ENCODE measurements at regions of chr1 and their contacts with region 1.

Region 1: DNA sequence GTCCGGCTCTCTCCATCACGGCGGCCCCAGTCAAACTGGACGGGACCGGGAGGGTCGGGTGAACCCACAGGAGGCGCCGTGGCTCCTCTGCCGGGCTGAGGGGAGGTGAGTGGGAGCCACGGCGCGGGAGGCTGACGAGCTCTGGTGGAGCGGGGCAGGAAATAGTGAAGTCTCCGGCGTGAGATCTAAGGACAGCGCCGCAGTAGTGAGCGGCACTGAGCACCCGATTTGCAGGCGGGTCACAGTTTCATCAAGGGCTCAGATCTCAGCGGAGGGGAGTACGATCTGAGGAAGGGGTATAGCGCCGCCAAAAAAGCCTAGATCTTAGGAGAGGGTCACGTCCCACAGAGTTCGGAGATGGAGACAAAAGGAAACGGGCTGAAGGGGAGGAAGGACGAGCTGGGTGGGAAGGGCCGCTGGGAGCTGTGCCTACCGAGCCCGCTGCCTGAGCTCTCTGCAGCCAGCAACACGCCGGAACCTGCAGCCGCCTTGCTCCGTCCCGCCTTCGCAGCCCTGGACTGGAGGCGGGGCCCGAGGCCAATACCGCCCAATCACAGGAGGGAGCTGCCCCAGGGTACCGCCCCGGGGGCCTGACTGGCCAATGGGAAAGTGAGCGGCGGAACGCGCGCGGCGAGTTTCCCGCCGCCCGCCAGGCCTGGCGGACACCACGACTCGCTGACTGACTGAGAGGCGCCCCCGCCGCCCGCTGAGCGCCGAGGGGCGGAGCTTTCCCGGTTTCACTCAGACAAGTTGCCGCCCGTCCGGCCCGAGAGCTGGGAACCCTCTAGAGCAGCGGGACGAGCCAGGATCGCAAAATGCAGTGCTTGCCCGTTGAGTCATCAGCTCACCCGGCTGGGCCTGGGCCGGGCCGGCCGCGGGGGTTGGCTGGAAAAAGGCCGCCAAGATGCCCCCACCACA is 1.9 kb downstream of the SFN start:
- DNase-seq: peak; percentile 93 to 95 (median 93)
- H3K4me3 ChIP-seq: peak overlapping the region; percentile 86 to 91
- H3K4me3 Mint-ChIP-seq: peak overlapping the region; percentile 93 to 99 (median 96)
- H3K27ac ChIP-seq: peak overlapping the region; percentile 75
- H3K27ac Mint-ChIP-seq: peak overlapping the region; percentile 86 to 97 (median 94)
- H3K4me1 ChIP-seq: peaks cover 30% of the 10 kb centered on the region
- H3K4me1 Mint-ChIP-seq: peaks cover 8 to 31% (median 23%) of the 10 kb centered on the region in 4 donors
- H3K27me3 ChIP-seq: no peaks in the 10 kb centered on the region
- H3K27me3 Mint-ChIP-seq: no peaks in the 10 kb centered on the region

Region 2: GRCh38 chr1:26799479-26800142 is 65.3 kb before region 1 on chr1:
- CTCF ChIA-PET with region 1: interaction called, 4 read pairs
- POLR2A ChIA-PET with region 1: interaction called, 13 read pairs
- intact Hi-C with region 1: no loop called
- DNase-seq: no peak
- H3K4me3 ChIP-seq: no peak overlapping the region
- H3K4me3 Mint-ChIP-seq: peak overlapping the region in 7 of 8 donors; percentile 49 to 83 (median 79)
- H3K27ac ChIP-seq: peak overlapping the region; percentile 30
- H3K27ac Mint-ChIP-seq: peak overlapping the region; percentile 91 to 97 (median 92)
- H3K4me1 ChIP-seq: peaks cover 35% of the 10 kb centered on the region
- H3K4me1 Mint-ChIP-seq: peaks cover 26 to 38% (median 32%) of the 10 kb centered on the region in 4 donors
- H3K27me3 ChIP-seq: no peaks in the 10 kb centered on the region
- H3K27me3 Mint-ChIP-seq: no peaks in the 10 kb centered on the region

Region 3: DNA sequence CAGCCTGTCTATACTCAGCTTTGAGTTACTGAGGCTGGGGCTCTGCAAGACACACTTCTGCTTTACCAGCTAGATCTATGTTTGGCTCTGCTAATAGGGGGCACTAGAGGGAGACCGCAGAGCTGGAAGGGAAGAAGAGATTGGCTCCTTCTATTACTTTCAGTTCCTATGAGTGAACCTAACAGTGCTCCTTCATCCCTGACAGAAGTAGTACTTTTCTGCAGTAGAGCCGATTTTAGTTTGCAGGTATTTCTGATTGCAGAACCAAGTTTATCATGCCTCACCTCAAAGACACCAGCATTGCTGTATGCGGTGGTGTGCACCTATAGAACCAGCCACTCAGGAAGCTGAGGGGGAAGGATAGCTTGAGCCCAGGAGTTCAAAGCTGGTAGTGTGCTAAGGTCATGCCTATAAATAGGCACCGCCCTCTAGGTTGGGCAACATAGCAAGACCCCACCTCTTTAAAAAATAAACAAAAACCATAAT is 44.0 kb before region 1 on chr1:
- CTCF ChIA-PET with region 1: interaction called, 15 read pairs
- POLR2A ChIA-PET with region 1: interaction called, 15 read pairs
- intact Hi-C with region 1: no loop called
- DNase-seq: peak; percentile 53 to 60 (median 57)
- H3K4me3 ChIP-seq: peak overlapping the region in 1 of 2 donors; percentile 42
- H3K4me3 Mint-ChIP-seq: peak overlapping the region; percentile 79 to 87 (median 84)
- H3K27ac ChIP-seq: peak overlapping the region; percentile 43
- H3K27ac Mint-ChIP-seq: peak overlapping the region; percentile 87 to 94 (median 92)
- H3K4me1 ChIP-seq: peaks cover 25% of the 10 kb centered on the region
- H3K4me1 Mint-ChIP-seq: peaks cover 15 to 36% (median 27%) of the 10 kb centered on the region in 4 donors
- H3K27me3 ChIP-seq: no peaks in the 10 kb centered on the region
- H3K27me3 Mint-ChIP-seq: no peaks in the 10 kb centered on the region

Region 4: GRCh38 chr1:26833432-26834405 is 31.1 kb before region 1 on chr1:
- CTCF ChIA-PET with region 1: interaction called, 27 read pairs
- POLR2A ChIA-PET with region 1: interaction called, 34 read pairs
- intact Hi-C with region 1: loop called (anchors 1 kb)
- DNase-seq: peak; percentile 89 to 98 (median 94)
- H3K4me3 ChIP-seq: peak overlapping the region in 1 of 2 donors; percentile 23
- H3K4me3 Mint-ChIP-seq: peak overlapping the region; percentile 74 to 92 (median 85)
- H3K27ac ChIP-seq: peak overlapping the region; percentile 97
- H3K27ac Mint-ChIP-seq: peak overlapping the region; percentile 98 to 100 (median 100)
- H3K4me1 ChIP-seq: peaks cover 74% of the 10 kb centered on the region
- H3K4me1 Mint-ChIP-seq: peaks cover 60 to 87% (median 73%) of the 10 kb centered on the region in 4 donors
- H3K27me3 ChIP-seq: no peaks in the 10 kb centered on the region
- H3K27me3 Mint-ChIP-seq: no peaks in the 10 kb centered on the region

Region 5: GRCh38 chr1:26877326-26877725 is 12.5 kb after region 1 on chr1:
- CTCF ChIA-PET with region 1: interaction called, 25 read pairs
- POLR2A ChIA-PET with region 1: interaction called, 14 read pairs
- intact Hi-C with region 1: loop called (anchors 1 kb)
- DNase-seq: no peak
- H3K4me3 ChIP-seq: no peak overlapping the region
- H3K4me3 Mint-ChIP-seq: no peak overlapping the region
- H3K27ac ChIP-seq: no peak overlapping the region
- H3K27ac Mint-ChIP-seq: no peak overlapping the region
- H3K4me1 ChIP-seq: no peaks in the 10 kb centered on the region
- H3K4me1 Mint-ChIP-seq: peaks cover 0 to 1% (median under 1%) of the 10 kb centered on the region in 4 donors
- H3K27me3 ChIP-seq: no peaks in the 10 kb centered on the region
- H3K27me3 Mint-ChIP-seq: no peaks in the 10 kb centered on the region

Region 6: GRCh38 chr1:26889551-26890466 is 24.9 kb after region 1 on chr1 and contains the start of gene GPN2:
- CTCF ChIA-PET with region 1: interaction called, 12 read pairs
- POLR2A ChIA-PET with region 1: interaction called, 27 read pairs
- intact Hi-C with region 1: loop called (anchors 1 kb)
- DNase-seq: peak; percentile 72 to 84 (median 75)
- H3K4me3 ChIP-seq: peak within 1 kb of the TSS; percentile 81 to 98
- H3K4me3 Mint-ChIP-seq: peak within 1 kb of the TSS; percentile 91 to 97 (median 96)
- H3K27ac ChIP-seq: peak within 1 kb of the TSS; percentile 93
- H3K27ac Mint-ChIP-seq: peak within 1 kb of the TSS; percentile 97 to 98 (median 97)
- H3K4me1 ChIP-seq: peaks cover 34% of the 10 kb centered on the region
- H3K4me1 Mint-ChIP-seq: peaks cover 22 to 46% (median 31%) of the 10 kb centered on the region in 4 donors
- H3K27me3 ChIP-seq: no peaks in the 10 kb centered on the region
- H3K27me3 Mint-ChIP-seq: no peaks in the 10 kb centered on the region
- total RNA-seq, gene GPN2: 37.0 to 38.0 TPM

Region 7: DNA sequence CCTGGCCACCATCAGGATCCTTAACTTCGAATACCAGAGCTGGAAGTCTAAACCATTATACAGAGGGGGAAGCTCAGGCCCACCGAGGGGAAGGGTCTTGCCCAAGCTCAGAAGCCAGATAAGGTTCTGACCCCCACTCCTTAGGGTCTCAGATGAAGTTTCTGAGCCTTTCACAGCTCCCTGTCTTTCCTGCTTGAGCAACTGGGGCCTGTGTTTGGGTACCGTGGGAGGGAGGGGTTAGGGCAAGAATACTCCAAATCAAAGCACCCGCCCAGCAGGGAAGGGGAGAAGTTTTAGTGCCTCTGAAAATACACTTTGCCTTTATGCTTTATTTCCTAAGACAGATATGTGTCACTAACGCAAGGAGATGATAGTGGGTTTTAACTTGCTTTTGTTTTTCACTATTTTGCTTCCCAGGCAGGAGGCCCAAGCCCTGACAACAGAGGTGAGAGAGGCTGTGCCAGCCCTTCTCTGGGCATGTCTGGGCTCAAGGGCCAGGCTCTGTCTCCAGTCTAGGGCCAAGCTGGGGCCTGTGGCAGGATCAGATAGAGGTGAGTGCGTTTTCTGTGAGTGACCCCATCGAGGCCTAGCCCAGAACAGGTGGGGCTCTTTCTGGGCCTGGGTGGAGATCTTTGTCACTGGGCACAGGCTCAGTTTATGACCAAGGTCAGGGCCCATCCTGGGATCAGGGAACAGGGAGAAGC is 168.3 kb after region 1 on chr1:
- CTCF ChIA-PET with region 1: no interaction called
- POLR2A ChIA-PET with region 1: no interaction called
- intact Hi-C with region 1: no loop called
- DNase-seq: no peak
- H3K4me3 ChIP-seq: no peak overlapping the region
- H3K4me3 Mint-ChIP-seq: no peak overlapping the region
- H3K27ac ChIP-seq: no peak overlapping the region
- H3K27ac Mint-ChIP-seq: no peak overlapping the region
- H3K4me1 ChIP-seq: no peaks in the 10 kb centered on the region
- H3K4me1 Mint-ChIP-seq: no peaks in the 10 kb centered on the region
- H3K27me3 ChIP-seq: no peaks in the 10 kb centered on the region
- H3K27me3 Mint-ChIP-seq: peaks cover 0 to 3% of the 10 kb centered on the region in 2 donors

Measured in CD4-positive, alpha-beta memory T cell (primary cell).